Endothelial cell of umbilical vein (primary cell): ENCODE measurements at regions of chr6 and their contacts with region 1.

Region 1: GRCh38 chr6:3813150-3813780 is 35.9 kb upstream of the FAM50B start:
- DNase-seq: peak; percentile 95
- H3K4me3 ChIP-seq: no peak overlapping the region
- H3K27ac ChIP-seq: peak overlapping the region; percentile 95
- H3K4me1 ChIP-seq: peaks cover 44% of the 10 kb centered on the region
- H3K27me3 ChIP-seq: no peaks in the 10 kb centered on the region
- CTCF ChIP-seq: no peak
- POLR2A ChIP-seq: peak; percentile 55

Region 2: GRCh38 chr6:3797231-3798054 is 15.8 kb before region 1 on chr6:
- CTCF ChIA-PET with region 1: interaction called, 23 read pairs
- POLR2A ChIA-PET with region 1: interaction called, 23 read pairs
- dilution Hi-C with region 1: no loop called
- intact Hi-C with region 1: loop called (anchors 1 kb)
- DNase-seq: peak; percentile 83
- H3K4me3 ChIP-seq: no peak overlapping the region
- H3K27ac ChIP-seq: peak overlapping the region; percentile 100
- H3K4me1 ChIP-seq: peaks cover 39% of the 10 kb centered on the region
- H3K27me3 ChIP-seq: no peaks in the 10 kb centered on the region
- CTCF ChIP-seq: no peak
- POLR2A ChIP-seq: peak; percentile 58